Activated B cell treated with CpG ODN at 0.5 μM for 24 hours (primary cell): ENCODE measurements at regions of chr7 and their contacts with region 1.

Region 1: GRCh38 chr7:9680713-9681112 is 1247.3 kb downstream of the NXPH1 start:
- DNase-seq: no peak
- ATAC-seq: no peak
- H3K4me3 Mint-ChIP-seq: no peak overlapping the region
- H3K27ac Mint-ChIP-seq: no peak overlapping the region
- H3K4me1 Mint-ChIP-seq: no peaks in the 10 kb centered on the region
- H3K27me3 Mint-ChIP-seq: no peaks in the 10 kb centered on the region
- CTCF ChIP-seq: no peak

Region 2: DNA sequence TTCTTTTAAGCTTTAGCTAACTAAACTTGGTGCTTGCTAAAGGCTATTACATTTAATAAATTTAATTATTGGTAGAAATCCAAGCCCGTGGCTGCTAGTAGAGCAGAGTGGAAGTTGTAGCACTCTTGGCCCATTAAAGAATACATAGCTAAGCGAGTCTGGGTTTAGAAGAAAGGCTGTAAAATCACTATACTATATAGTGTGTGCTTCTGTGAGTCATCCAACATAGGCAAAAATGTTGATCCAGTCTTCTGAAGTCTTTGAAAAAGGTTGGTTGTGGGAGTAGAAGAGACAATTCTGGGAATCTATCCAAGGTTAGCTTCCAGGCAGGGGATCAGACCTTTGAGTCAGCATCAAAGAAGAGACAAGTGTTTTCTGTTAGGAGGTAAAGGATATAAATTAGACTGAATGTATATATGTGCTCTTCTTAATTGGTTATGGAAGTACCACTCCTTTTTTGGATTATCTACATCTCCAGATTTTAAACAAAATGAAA is 583.1 kb before region 1 on chr7:
- CTCF ChIA-PET with region 1: no interaction called
- POLR2A ChIA-PET with region 1: no interaction called
- intact Hi-C with region 1: no loop called
- DNase-seq: no peak
- ATAC-seq: no peak
- H3K4me3 Mint-ChIP-seq: no peak overlapping the region
- H3K27ac Mint-ChIP-seq: no peak overlapping the region
- H3K4me1 Mint-ChIP-seq: no peaks in the 10 kb centered on the region
- H3K27me3 Mint-ChIP-seq: no peaks in the 10 kb centered on the region
- CTCF ChIP-seq: no peak

Region 3: GRCh38 chr7:9691286-9691685 is 10.6 kb after region 1 on chr7:
- CTCF ChIA-PET with region 1: no interaction called
- POLR2A ChIA-PET with region 1: no interaction called
- intact Hi-C with region 1: no loop called
- DNase-seq: no peak
- ATAC-seq: no peak
- H3K4me3 Mint-ChIP-seq: no peak overlapping the region
- H3K27ac Mint-ChIP-seq: no peak overlapping the region
- H3K4me1 Mint-ChIP-seq: no peaks in the 10 kb centered on the region
- H3K27me3 Mint-ChIP-seq: no peaks in the 10 kb centered on the region
- CTCF ChIP-seq: no peak

Region 4: DNA sequence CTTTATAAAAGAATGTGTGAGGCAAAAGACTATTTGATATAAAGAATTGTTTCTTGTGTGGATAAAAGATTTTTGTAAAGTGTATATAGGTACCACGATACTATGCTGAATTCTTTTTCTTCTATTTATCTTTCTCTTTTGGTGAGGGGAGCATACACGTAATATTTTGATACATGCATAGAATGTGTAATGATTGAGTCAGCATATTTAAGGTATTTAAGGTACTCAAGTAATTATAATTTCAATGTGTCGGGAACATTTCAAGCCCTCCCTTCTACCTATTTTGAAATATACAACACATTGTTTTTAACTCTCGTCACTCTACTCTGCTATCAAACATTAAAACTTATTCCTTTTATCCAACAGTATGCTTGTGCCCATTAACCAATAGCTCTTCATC is 71.3 kb after region 1 on chr7:
- CTCF ChIA-PET with region 1: no interaction called
- POLR2A ChIA-PET with region 1: no interaction called
- intact Hi-C with region 1: loop called (anchors 10 kb)
- DNase-seq: no peak
- ATAC-seq: no peak
- H3K4me3 Mint-ChIP-seq: no peak overlapping the region
- H3K27ac Mint-ChIP-seq: no peak overlapping the region
- H3K4me1 Mint-ChIP-seq: no peaks in the 10 kb centered on the region
- H3K27me3 Mint-ChIP-seq: no peaks in the 10 kb centered on the region
- CTCF ChIP-seq: no peak